ENCODE measurements at regions of chr13 and their contacts with region 1.

Region 1: GRCh38 chr13:37011002-37011401 is 10.4 kb downstream of the EXOSC8 start:
- DNase-seq: no peak
- ATAC-seq: no peak
- H3K4me3 ChIP-seq: no peak overlapping the region
- H3K4me3 Mint-ChIP-seq: no peak overlapping the region
- H3K27ac ChIP-seq: no peak overlapping the region
- H3K27ac Mint-ChIP-seq: peak overlapping the region in 1 of 9 donors; percentile 21
- H3K4me1 ChIP-seq: no peaks in the 10 kb centered on the region
- H3K4me1 Mint-ChIP-seq: peaks cover 0 to 15% (median 7%) of the 10 kb centered on the region in 7 donors
- H3K27me3 ChIP-seq: no peaks in the 10 kb centered on the region
- H3K27me3 Mint-ChIP-seq: no peaks in the 10 kb centered on the region

Region 2: DNA sequence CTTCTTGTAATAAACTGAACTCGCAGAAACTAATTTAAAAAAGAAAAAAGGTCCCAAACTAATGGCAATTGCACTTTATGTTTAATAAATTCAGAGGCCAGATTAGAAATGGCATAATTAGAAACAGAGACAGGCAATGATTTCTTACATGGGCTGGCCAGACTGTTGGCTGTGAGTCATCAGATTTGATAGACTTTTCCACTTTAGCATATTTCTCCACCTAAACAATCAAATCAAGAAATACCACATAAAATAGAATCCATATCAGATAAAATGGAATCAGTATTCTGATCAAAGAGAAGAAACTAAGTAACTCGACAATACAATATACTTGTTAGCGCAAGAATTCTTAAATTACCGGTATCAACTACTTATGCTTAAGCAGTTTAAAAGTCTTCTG is 18.6 kb after region 1 on chr13:
- CTCF ChIA-PET with region 1: no interaction called
- POLR2A ChIA-PET with region 1: no interaction called
- intact Hi-C with region 1: loop called in 1 of 2 experiments (anchors 2 kb)
- DNase-seq: no peak
- ATAC-seq: no peak
- H3K4me3 ChIP-seq: no peak overlapping the region
- H3K4me3 Mint-ChIP-seq: no peak overlapping the region
- H3K27ac ChIP-seq: no peak overlapping the region
- H3K27ac Mint-ChIP-seq: peak overlapping the region in 1 of 9 donors; percentile 17
- H3K4me1 ChIP-seq: no peaks in the 10 kb centered on the region
- H3K4me1 Mint-ChIP-seq: peaks cover 0 to 7% (median 0%) of the 10 kb centered on the region in 7 donors
- H3K27me3 ChIP-seq: no peaks in the 10 kb centered on the region
- H3K27me3 Mint-ChIP-seq: no peaks in the 10 kb centered on the region

Region 3: GRCh38 chr13:37049810-37050209 is 38.8 kb after region 1 on chr13:
- CTCF ChIA-PET with region 1: no interaction called
- POLR2A ChIA-PET with region 1: interaction called, 3 read pairs
- intact Hi-C with region 1: loop called in 1 of 2 experiments (anchors 5 kb)
- DNase-seq: no peak
- ATAC-seq: no peak
- H3K4me3 ChIP-seq: no peak overlapping the region
- H3K4me3 Mint-ChIP-seq: no peak overlapping the region
- H3K27ac ChIP-seq: no peak overlapping the region
- H3K27ac Mint-ChIP-seq: no peak overlapping the region
- H3K4me1 ChIP-seq: peaks cover 0 to 4% of the 10 kb centered on the region in 2 donors
- H3K4me1 Mint-ChIP-seq: peaks cover 19 to 55% (median 45%) of the 10 kb centered on the region in 7 donors
- H3K27me3 ChIP-seq: no peaks in the 10 kb centered on the region
- H3K27me3 Mint-ChIP-seq: no peaks in the 10 kb centered on the region